Activated T-helper 2 cell treated with anti-CD3 and anti-CD28 coated beads, Interferon-gamma antibody, Interleukin-2, Interleukin-4, amounts not matched to agents 10 μg/mL and 5 μg/mL and 100 μg/mL, durations not matched to agents 14 hours and 24 hours and 36 hours (primary cell): ENCODE measurements at regions of chr12 and their contacts with region 1.

Region 1: GRCh38 chr12:98998697-98999299 is 353.7 kb downstream of the APAF1 start:
- DNase-seq: no peak
- H3K4me3 Mint-ChIP-seq: no peak overlapping the region
- H3K27ac Mint-ChIP-seq: no peak overlapping the region
- H3K4me1 Mint-ChIP-seq: no peaks in the 10 kb centered on the region
- H3K27me3 Mint-ChIP-seq: no peaks in the 10 kb centered on the region

Region 2: GRCh38 chr12:98698603-98699463 is 300.0 kb before region 1 on chr12:
- intact Hi-C with region 1: loop called (anchors 1 kb)
- DNase-seq: no peak
- H3K4me3 Mint-ChIP-seq: no peak overlapping the region
- H3K27ac Mint-ChIP-seq: no peak overlapping the region
- H3K4me1 Mint-ChIP-seq: peaks cover 13% of the 10 kb centered on the region
- H3K27me3 Mint-ChIP-seq: no peaks in the 10 kb centered on the region

Region 3: GRCh38 chr12:98725476-98726247 is 273.1 kb before region 1 on chr12:
- intact Hi-C with region 1: loop called (anchors 1 kb)
- DNase-seq: peak; percentile 34
- H3K4me3 Mint-ChIP-seq: no peak overlapping the region
- H3K27ac Mint-ChIP-seq: peak overlapping the region; percentile 67
- H3K4me1 Mint-ChIP-seq: peaks cover 19% of the 10 kb centered on the region
- H3K27me3 Mint-ChIP-seq: no peaks in the 10 kb centered on the region